Psoas muscle (tissue), 8 donors: ENCODE measurements at regions of chr10 and their contacts with region 1.

Region 1: DNA sequence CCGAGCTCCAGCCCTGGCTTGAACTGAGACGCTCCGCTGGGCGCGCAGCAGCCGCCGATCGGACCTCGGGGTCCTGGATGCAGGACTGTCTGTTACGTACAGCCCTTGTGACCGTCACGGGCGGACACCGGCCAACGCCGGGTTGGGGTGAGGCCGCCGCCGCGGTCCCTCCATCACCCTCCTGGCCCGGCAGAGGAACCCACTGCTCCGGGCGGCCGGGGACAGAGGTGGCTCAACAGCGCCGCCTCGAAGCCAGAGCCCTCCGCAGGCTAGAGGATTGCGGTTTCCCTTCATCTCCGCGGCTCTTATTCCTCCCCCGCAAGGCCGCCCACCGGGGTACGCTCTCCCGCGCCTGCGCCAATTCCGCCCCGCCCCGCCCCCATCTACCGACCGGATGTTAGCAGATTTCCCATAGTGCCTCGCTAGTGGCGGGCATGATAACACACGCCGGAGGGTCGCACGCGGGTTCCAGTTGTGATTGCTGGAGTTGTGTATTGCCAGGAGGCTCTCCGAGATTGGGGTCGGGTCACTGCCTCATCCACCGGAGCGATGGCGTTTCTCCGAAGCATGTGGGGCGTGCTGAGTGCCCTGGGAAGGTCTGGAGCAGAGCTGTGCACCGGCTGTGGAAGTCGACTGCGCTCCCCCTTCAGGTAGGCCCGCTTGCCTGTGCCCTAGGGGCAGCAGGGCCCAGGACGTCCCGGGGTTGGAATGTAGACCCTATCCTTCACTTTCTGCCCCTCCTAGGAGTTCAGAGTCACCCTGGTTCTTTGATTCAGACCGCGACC is at the start of gene TFAM:
- DNase-seq: peak; percentile 96 to 98
- ATAC-seq: peak; percentile 96 to 97 (median 96)
- H3K4me3 ChIP-seq: peak within 1 kb of the TSS; percentile 92
- H3K27ac ChIP-seq: peak within 1 kb of the TSS; percentile 93
- H3K4me1 ChIP-seq: peaks cover 15% of the 10 kb centered on the region
- H3K27me3 ChIP-seq: no peaks in the 10 kb centered on the region
- CTCF ChIP-seq: peak; percentile 52
- total RNA-seq, gene TFAM: 22.7 to 36.0 (median 30.2) TPM

Region 2: DNA sequence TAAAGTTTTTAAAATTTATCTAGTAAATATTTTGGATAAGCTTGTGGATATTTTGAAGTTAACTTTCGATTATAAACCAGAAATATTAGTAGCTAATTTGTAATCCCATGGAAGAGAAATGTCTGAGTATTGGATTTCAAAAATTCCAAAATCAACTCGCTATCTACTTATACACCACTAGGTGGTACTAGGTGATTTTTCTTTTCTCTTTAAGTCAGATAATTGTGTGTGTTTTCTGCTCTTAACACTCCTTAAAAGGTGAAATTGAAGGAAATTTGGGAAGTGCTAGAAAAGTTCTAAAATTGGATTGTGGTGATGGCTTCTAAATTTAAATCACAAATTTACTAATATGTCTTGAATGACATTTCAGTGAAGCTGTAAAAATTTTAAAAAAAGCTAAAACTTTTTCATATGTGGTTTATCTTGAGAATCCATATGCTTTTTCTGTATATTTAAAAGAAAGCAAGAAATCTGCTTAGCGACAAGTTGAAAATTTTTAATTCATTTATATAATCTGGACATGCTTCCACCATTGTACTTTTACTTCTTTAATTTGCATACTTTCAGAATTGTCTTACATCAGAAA is 207.7 kb before region 1 on chr10:
- intact Hi-C with region 1: loop called (anchors 5 to 10 kb)
- DNase-seq: no peak
- ATAC-seq: peak in 2 of 4 donors; percentile 60 to 72
- H3K4me3 ChIP-seq: no peak overlapping the region
- H3K27ac ChIP-seq: no peak overlapping the region
- H3K4me1 ChIP-seq: no peaks in the 10 kb centered on the region
- H3K27me3 ChIP-seq: peaks cover 0 to 3% (median 0%) of the 10 kb centered on the region in 3 donors
- CTCF ChIP-seq: peak; percentile 75

Region 3: GRCh38 chr10:58189269-58189668 is 195.9 kb before region 1 on chr10:
- intact Hi-C with region 1: loop called (anchors 5 to 10 kb)
- DNase-seq: no peak
- ATAC-seq: peak; percentile 70 to 93 (median 90)
- H3K4me3 ChIP-seq: peak overlapping the region; percentile 37
- H3K27ac ChIP-seq: peak overlapping the region; percentile 79
- H3K4me1 ChIP-seq: peaks cover 27% of the 10 kb centered on the region
- H3K27me3 ChIP-seq: no peaks in the 10 kb centered on the region
- CTCF ChIP-seq: no peak

Region 4: GRCh38 chr10:58299580-58299979 is 85.6 kb before region 1 on chr10:
- intact Hi-C with region 1: loop called (anchors 1 to 5 kb)
- DNase-seq: peak in 1 of 2 donors; percentile 27
- ATAC-seq: peak; percentile 76 to 91 (median 80)
- H3K4me3 ChIP-seq: no peak overlapping the region
- H3K27ac ChIP-seq: no peak overlapping the region
- H3K4me1 ChIP-seq: no peaks in the 10 kb centered on the region
- H3K27me3 ChIP-seq: no peaks in the 10 kb centered on the region
- CTCF ChIP-seq: peak; percentile 83

Region 5: GRCh38 chr10:58334817-58335305 is 50.3 kb before region 1 on chr10 and contains the start of gene UBE2D1:
- intact Hi-C with region 1: loop called (anchors 1 to 2 kb)
- DNase-seq: peak; percentile 89 to 95
- ATAC-seq: peak; percentile 89 to 93 (median 90)
- H3K4me3 ChIP-seq: peak within 1 kb of the TSS; percentile 92
- H3K27ac ChIP-seq: peak within 1 kb of the TSS; percentile 99
- H3K4me1 ChIP-seq: peaks cover 39% of the 10 kb centered on the region
- H3K27me3 ChIP-seq: no peaks in the 10 kb centered on the region
- CTCF ChIP-seq: peak; percentile 26
- total RNA-seq, gene UBE2D1: 36.6 to 115 (median 46.6) TPM

Region 6: DNA sequence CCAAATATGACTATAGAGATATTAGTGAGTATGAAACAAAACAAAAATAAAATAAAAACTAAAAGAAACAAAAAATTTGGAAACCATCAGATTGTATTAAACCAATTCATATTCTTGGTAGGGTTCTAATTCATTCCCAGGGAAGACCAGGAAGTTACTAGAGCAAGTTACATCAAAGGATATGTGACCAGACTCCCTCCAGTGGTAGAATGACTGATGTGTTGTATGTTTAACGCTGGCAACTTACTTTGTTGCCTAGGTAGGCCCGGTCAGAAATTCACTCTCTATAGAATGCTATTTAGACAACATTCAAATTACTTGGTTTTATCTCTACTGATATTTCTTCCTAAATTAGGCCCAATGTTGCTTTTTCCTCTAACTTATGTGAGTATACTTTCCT is 796.5 kb after region 1 on chr10:
- intact Hi-C with region 1: no loop called
- DNase-seq: no peak
- ATAC-seq: peak in 3 of 4 donors; percentile 37 to 72 (median 42)
- H3K4me3 ChIP-seq: no peak overlapping the region
- H3K27ac ChIP-seq: no peak overlapping the region
- H3K4me1 ChIP-seq: no peaks in the 10 kb centered on the region
- H3K27me3 ChIP-seq: peaks cover 0 to 25% (median 2%) of the 10 kb centered on the region in 3 donors
- CTCF ChIP-seq: peak; percentile 54